Natural killer cell (primary cell): ENCODE measurements at regions of chr9 and their contacts with region 1.

Region 1: DNA sequence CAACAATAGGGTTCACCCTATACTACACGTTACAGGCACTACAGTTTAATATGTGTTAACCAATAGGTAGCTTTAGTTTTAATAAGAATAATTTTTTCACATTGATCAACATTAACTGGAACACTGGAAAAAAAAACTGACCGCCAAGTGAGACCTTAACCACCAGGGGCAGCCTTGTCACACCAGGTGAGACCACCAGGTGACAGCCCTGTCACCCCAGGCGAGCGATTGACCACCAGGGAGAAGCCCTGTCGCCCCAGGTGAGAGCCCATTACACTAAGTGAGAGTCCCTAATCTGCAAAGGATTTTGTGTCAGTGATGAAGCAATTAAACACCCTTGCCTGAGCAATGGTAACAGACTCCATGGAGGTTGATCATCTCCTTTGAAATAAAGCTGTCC is 75.4 kb upstream of the SYK start:
- DNase-seq: no peak
- ATAC-seq: no peak
- H3K4me3 ChIP-seq: no peak overlapping the region
- H3K4me3 Mint-ChIP-seq: no peak overlapping the region
- H3K27ac ChIP-seq: no peak overlapping the region
- H3K27ac Mint-ChIP-seq: no peak overlapping the region
- H3K4me1 ChIP-seq: no peaks in the 10 kb centered on the region
- H3K4me1 Mint-ChIP-seq: no peaks in the 10 kb centered on the region
- H3K27me3 ChIP-seq: no peaks in the 10 kb centered on the region
- H3K27me3 Mint-ChIP-seq: peaks cover 2 to 3% of the 10 kb centered on the region in 2 donors
- CTCF ChIP-seq: no peak

Region 2: DNA sequence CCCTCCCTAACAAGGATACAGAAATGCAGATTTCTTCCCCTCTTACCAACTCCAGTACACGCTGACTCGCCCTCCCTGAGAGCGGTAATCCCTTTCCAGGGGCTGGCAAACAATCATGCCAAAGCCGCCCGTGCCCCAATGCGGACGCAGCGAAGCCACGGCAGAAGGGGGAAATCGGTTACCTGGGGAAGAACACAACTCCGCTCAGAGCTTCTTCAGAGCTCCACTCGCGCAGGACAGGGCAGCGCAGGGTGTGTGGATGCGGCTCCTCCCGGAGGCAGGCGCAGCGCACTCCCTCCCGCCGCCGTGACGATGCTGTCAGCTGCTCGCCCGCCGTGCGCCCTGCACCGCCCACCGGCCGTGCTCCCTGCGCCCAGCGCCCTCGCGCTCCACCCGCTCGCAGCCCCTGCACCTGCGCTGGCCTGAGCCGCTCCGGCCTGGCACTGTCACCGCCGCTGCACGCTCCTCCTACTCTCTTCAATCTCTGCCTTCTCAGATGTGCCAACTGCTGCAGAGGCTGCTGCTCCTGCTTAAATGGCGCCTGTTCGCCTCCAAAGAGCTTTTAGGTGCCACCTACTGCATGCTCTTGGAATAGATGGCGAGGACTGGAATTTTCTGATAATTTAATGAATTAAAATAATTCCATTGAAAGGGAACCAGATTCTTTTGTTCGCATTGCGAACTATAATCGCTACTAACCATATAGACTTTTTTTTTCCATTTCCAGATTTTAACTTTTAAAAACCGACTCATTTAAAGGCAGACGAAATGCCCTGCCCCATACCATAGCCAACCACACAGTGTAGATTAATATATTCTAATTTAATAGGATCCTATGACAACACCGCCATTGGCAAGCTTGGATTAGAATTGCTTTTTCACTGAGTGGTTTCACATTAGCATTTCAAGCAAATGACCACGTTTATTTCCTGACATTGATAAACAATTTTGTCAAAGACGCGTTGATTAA is 83.4 kb before region 1 on chr9 and contains the start of gene DIRAS2:
- intact Hi-C with region 1: no loop called
- DNase-seq: peak in 1 of 2 donors; percentile 2
- ATAC-seq: peak in 1 of 3 donors; percentile 52
- H3K4me3 ChIP-seq: no peak within 1 kb of the TSS
- H3K4me3 Mint-ChIP-seq: peak within 1 kb of the TSS; percentile 72
- H3K27ac ChIP-seq: no peak within 1 kb of the TSS
- H3K27ac Mint-ChIP-seq: no peak within 1 kb of the TSS
- H3K4me1 ChIP-seq: no peaks in the 10 kb centered on the region
- H3K4me1 Mint-ChIP-seq: peaks cover 0 to 9% of the 10 kb centered on the region in 2 donors
- H3K27me3 ChIP-seq: peaks cover 12% of the 10 kb centered on the region
- H3K27me3 Mint-ChIP-seq: peaks cover 47 to 90% of the 10 kb centered on the region in 2 donors
- CTCF ChIP-seq: no peak
- total RNA-seq, gene DIRAS2: not detected

Region 3: DNA sequence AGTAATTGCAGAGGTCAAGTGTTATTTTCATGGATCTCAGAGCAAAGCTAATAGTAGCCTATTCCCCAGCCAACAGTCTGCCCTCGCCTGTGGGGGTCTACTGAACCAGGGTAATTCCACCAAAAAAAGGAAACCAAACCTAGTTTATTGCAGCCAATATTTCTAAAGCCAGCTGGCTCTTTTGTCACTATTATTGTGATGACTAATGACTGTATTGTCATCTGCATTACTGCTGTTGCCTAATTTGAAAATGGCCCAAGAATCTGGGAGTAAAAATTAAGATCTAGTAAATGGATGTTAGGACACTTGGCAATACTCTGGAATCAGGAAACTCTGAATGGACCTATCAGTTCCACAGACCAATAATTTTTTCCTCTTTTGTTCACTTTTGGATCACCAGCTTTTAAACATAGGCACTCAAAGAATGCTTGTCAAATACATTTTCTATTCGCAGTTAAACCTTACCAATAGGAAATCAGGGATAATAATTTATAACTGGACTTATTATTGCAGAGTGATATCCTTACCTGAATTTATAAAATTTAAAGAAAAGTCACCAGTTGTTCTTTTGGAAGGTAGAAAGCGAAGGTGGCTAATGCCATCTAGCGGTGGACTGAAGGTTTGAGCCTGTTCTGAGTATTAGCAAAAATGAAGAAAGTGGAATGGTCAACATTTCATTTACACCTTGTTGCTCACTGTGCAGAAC is 144.6 kb after region 1 on chr9:
- intact Hi-C with region 1: loop called (anchors 10 kb)
- DNase-seq: peak in 1 of 2 donors; percentile 73
- ATAC-seq: peak in 2 of 3 donors; percentile 61 to 63
- H3K4me3 ChIP-seq: no peak overlapping the region
- H3K4me3 Mint-ChIP-seq: no peak overlapping the region
- H3K27ac ChIP-seq: no peak overlapping the region
- H3K27ac Mint-ChIP-seq: no peak overlapping the region
- H3K4me1 ChIP-seq: no peaks in the 10 kb centered on the region
- H3K4me1 Mint-ChIP-seq: peaks cover 0 to 11% of the 10 kb centered on the region in 2 donors
- H3K27me3 ChIP-seq: no peaks in the 10 kb centered on the region
- H3K27me3 Mint-ChIP-seq: no peaks in the 10 kb centered on the region
- CTCF ChIP-seq: peak; percentile 97

Region 4: DNA sequence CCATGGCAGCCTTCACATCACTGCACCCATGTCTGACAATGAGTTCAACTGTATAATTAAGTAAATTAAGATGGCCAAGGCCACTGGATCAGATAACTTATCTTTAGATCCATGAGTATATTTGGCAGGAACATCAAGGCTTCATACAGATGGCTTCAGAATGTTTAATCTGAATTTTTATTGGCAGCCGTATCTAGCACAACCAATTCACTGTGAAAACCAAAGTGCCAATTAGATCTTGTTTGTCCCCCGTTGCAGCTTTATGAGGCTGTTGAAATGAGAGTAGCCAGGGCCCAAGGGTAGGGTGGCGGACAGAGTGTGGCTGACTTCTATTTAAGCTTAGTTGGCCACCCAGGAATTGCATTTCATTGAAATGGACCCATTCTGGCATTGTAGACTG is 213.1 kb after region 1 on chr9:
- intact Hi-C with region 1: no loop called
- DNase-seq: no peak
- ATAC-seq: no peak
- H3K4me3 ChIP-seq: no peak overlapping the region
- H3K4me3 Mint-ChIP-seq: no peak overlapping the region
- H3K27ac ChIP-seq: no peak overlapping the region
- H3K27ac Mint-ChIP-seq: no peak overlapping the region
- H3K4me1 ChIP-seq: no peaks in the 10 kb centered on the region
- H3K4me1 Mint-ChIP-seq: no peaks in the 10 kb centered on the region
- H3K27me3 ChIP-seq: no peaks in the 10 kb centered on the region
- H3K27me3 Mint-ChIP-seq: peaks cover 5 to 16% of the 10 kb centered on the region in 2 donors
- CTCF ChIP-seq: no peak